Left lung (tissue), 14 donors: ENCODE measurements at regions of chr22 and their contacts with region 1.

Region 1: GRCh38 chr22:28855355-28856094 is 27.8 kb upstream of the ZNRF3 start:
- DNase-seq: peak in 2 of 4 donors; percentile 65 to 79
- ATAC-seq: peak; percentile 95
- H3K4me3 ChIP-seq: no peak overlapping the region
- H3K27ac ChIP-seq: no peak overlapping the region
- H3K4me1 ChIP-seq: no peaks in the 10 kb centered on the region
- H3K27me3 ChIP-seq: no peaks in the 10 kb centered on the region
- CTCF ChIP-seq: peak; percentile 87 to 89

Region 2: GRCh38 chr22:28620244-28620922 is 235.1 kb before region 1 on chr22:
- intact Hi-C with region 1: no loop called
- DNase-seq: no peak
- ATAC-seq: no peak
- H3K4me3 ChIP-seq: no peak overlapping the region
- H3K27ac ChIP-seq: no peak overlapping the region
- H3K4me1 ChIP-seq: no peaks in the 10 kb centered on the region
- H3K27me3 ChIP-seq: no peaks in the 10 kb centered on the region
- CTCF ChIP-seq: no peak

Region 3: GRCh38 chr22:28969401-28970168 is 114.1 kb after region 1 on chr22:
- intact Hi-C with region 1: no loop called
- DNase-seq: no peak
- ATAC-seq: no peak
- H3K4me3 ChIP-seq: no peak overlapping the region
- H3K27ac ChIP-seq: no peak overlapping the region
- H3K4me1 ChIP-seq: no peaks in the 10 kb centered on the region
- H3K27me3 ChIP-seq: no peaks in the 10 kb centered on the region
- CTCF ChIP-seq: no peak

Region 4: DNA sequence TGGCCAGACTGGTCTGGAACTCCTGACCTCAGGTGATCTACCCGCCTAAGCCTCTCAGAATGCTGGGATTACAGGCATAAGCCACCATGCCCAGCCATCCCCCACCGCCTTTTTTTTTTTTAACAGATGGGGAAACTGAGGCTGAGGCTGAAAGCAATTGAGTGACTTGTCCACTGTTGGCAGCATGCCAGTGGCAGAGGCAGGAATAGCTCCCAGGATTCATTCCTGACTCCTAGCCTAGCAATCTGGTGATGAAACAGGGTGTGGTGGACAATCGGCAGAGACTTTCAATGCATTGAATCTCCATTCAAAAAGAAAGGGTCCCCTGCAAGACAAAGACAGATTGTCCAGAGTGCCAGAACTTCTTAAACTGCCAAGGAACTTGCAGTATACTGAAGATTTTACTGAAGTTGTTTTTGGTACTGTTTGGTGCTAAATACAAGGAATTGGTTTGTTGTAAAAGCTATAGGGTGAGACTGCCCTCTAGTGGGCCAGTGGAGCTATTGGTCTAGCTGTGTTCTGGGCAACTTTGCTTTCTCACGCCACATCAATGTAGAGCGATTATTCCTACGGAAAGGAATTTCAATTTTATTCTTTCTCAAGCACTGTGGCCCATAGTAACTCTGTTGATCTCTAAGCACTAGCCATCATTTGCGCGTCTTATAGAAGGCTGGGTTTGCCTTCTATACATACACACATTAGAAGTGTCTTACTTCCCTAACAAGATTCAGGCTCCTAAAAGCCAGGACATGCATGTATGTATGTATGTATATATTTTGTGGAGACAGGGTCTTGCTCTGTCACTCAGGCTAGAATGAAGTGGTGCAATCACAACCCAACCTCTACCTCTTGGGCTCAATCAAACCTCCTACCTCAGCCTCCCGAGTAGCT is 185.1 kb after region 1 on chr22:
- intact Hi-C with region 1: loop called in 1 of 2 experiments (anchors 5 kb)
- DNase-seq: peak in 3 of 4 donors; percentile 55 to 89 (median 78)
- ATAC-seq: peak; percentile 87
- H3K4me3 ChIP-seq: no peak overlapping the region
- H3K27ac ChIP-seq: peak overlapping the region in 1 of 2 donors; percentile 13
- H3K4me1 ChIP-seq: peaks cover 14 to 21% of the 10 kb centered on the region in 2 donors
- H3K27me3 ChIP-seq: no peaks in the 10 kb centered on the region
- CTCF ChIP-seq: peak; percentile 96 to 97

Region 5: GRCh38 chr22:29259253-29259899 is 403.9 kb after region 1 on chr22:
- intact Hi-C with region 1: loop called in 1 of 2 experiments (anchors 10 kb)
- DNase-seq: no peak
- ATAC-seq: no peak
- H3K4me3 ChIP-seq: no peak overlapping the region
- H3K27ac ChIP-seq: no peak overlapping the region
- H3K4me1 ChIP-seq: no peaks in the 10 kb centered on the region
- H3K27me3 ChIP-seq: no peaks in the 10 kb centered on the region
- CTCF ChIP-seq: no peak